B cell (primary cell): ENCODE measurements at regions of chr22 and their contacts with region 1.

Region 1: DNA sequence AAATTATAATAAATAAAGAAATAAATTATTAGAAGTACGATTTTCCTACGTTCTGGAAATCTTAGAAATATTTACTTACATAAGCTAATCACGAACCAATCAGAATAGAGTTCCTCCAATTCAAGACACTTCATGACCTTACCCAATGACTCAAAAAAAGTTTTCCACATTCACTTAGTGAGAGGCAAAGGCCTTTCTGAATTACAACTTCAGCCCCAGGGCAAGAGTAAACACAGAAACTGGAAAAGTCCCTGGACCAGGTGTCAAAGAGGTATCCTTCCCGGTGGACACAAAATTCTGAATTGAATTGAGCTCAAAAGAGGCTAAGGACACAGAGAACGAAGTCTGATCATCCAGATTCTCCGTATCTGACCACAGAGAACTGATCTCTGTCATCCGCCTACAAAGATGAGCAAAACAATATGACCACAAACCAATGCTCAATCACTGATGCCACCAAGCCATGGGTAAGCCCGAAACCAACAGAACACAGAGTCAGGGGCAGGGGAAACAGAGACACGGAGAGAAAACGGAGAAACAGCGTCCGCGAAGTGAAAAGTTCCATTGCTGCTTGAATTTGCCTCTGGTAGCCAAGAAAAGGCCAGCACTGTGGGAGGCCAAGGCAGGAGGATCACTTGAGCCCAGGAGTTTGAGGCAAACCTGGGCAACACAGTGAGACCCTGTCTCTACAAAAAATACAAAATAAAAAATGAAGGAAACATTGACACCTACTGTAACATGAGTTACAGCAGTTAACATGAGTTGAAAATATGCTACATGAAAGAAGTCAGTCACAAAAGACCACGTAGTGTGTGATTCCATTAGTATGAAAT is 6.8 kb downstream of the BID start:
- DNase-seq: no peak
- ATAC-seq: peak; percentile 28
- H3K4me3 ChIP-seq: no peak overlapping the region
- H3K4me3 Mint-ChIP-seq: peak overlapping the region; percentile 55
- H3K27ac ChIP-seq: no peak overlapping the region
- H3K27ac Mint-ChIP-seq: peak overlapping the region; percentile 75
- H3K4me1 ChIP-seq: peaks cover 33 to 47% of the 10 kb centered on the region in 2 donors
- H3K4me1 Mint-ChIP-seq: peaks cover 47% of the 10 kb centered on the region
- H3K27me3 ChIP-seq: no peaks in the 10 kb centered on the region
- H3K27me3 Mint-ChIP-seq: no peaks in the 10 kb centered on the region
- CTCF ChIP-seq: no peak

Region 2: GRCh38 chr22:17754233-17754925 is 13.1 kb before region 1 on chr22:
- CTCF ChIA-PET with region 1: interaction called, 10 read pairs
- POLR2A ChIA-PET with region 1: interaction called, 12 read pairs
- intact Hi-C with region 1: no loop called
- DNase-seq: peak; percentile 42
- ATAC-seq: peak; percentile 43
- H3K4me3 ChIP-seq: no peak overlapping the region
- H3K4me3 Mint-ChIP-seq: no peak overlapping the region
- H3K27ac ChIP-seq: no peak overlapping the region
- H3K27ac Mint-ChIP-seq: no peak overlapping the region
- H3K4me1 ChIP-seq: no peaks in the 10 kb centered on the region
- H3K4me1 Mint-ChIP-seq: no peaks in the 10 kb centered on the region
- H3K27me3 ChIP-seq: no peaks in the 10 kb centered on the region
- H3K27me3 Mint-ChIP-seq: no peaks in the 10 kb centered on the region
- CTCF ChIP-seq: peak; percentile 35

Region 3: GRCh38 chr22:17779286-17780115 is 12.1 kb after region 1 on chr22:
- CTCF ChIA-PET with region 1: interaction called, 73 read pairs
- POLR2A ChIA-PET with region 1: interaction called, 14 read pairs
- intact Hi-C with region 1: no loop called
- DNase-seq: peak; percentile 19
- ATAC-seq: no peak
- H3K4me3 ChIP-seq: no peak overlapping the region
- H3K4me3 Mint-ChIP-seq: peak overlapping the region; percentile 96
- H3K27ac ChIP-seq: no peak overlapping the region
- H3K27ac Mint-ChIP-seq: peak overlapping the region; percentile 79
- H3K4me1 ChIP-seq: peaks cover 51 to 72% of the 10 kb centered on the region in 2 donors
- H3K4me1 Mint-ChIP-seq: peaks cover 72% of the 10 kb centered on the region
- H3K27me3 ChIP-seq: no peaks in the 10 kb centered on the region
- H3K27me3 Mint-ChIP-seq: no peaks in the 10 kb centered on the region
- CTCF ChIP-seq: no peak